Caco-2 (cell line): ENCODE measurements at regions of chr4 and their contacts with region 1.

Region 1: DNA sequence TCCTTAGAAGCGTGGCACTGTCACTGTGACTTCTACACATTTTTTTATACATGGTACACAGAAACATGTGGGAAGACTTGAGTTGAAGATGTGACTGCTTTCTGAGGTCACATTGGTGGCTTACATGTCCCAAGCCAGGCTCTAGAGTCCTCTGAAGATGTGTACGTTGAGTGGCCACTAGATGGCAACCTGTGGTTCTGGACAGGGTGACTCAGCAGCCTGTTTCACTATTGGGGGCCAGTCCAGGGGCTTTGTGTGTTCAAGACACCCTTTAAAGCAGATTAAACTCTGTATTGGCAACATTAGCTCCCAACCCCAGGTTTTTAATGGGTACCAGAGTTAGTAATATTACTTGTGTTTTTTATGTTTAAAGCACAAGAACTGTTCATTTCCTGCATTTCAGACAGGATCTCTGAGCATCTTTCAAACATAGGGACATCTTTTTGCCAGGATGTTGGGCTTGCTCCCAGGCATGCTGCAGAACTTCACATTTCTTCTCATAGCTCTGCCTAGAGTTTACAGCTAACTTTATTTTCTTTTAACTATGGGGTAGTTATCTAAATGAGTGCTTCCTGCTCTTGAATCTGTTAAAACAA is 53.0 kb downstream of the DCUN1D4 start:
- DNase-seq: peak; percentile 64 to 65
- H3K4me3 ChIP-seq: no peak overlapping the region
- H3K4me3 Mint-ChIP-seq: no peak overlapping the region
- H3K27ac Mint-ChIP-seq: peak overlapping the region; percentile 78
- H3K4me1 ChIP-seq: no peaks in the 10 kb centered on the region
- H3K4me1 Mint-ChIP-seq: no peaks in the 10 kb centered on the region
- H3K27me3 ChIP-seq: no peaks in the 10 kb centered on the region
- H3K27me3 Mint-ChIP-seq: no peaks in the 10 kb centered on the region
- CTCF ChIP-seq: peak; percentile 56 to 81

Region 2: GRCh38 chr4:51831133-51831532 is 64.8 kb before region 1 on chr4:
- CTCF ChIA-PET with region 1: no interaction called
- POLR2A ChIA-PET with region 1: no interaction called
- intact Hi-C with region 1: loop called (anchors 1 kb)
- DNase-seq: peak; percentile 64 to 75
- H3K4me3 ChIP-seq: no peak overlapping the region
- H3K4me3 Mint-ChIP-seq: no peak overlapping the region
- H3K27ac Mint-ChIP-seq: no peak overlapping the region
- H3K4me1 ChIP-seq: no peaks in the 10 kb centered on the region
- H3K4me1 Mint-ChIP-seq: no peaks in the 10 kb centered on the region
- H3K27me3 ChIP-seq: no peaks in the 10 kb centered on the region
- H3K27me3 Mint-ChIP-seq: peaks cover 8% of the 10 kb centered on the region
- CTCF ChIP-seq: peak; percentile 68 to 78

Region 3: GRCh38 chr4:51909236-51909703 is 13.4 kb after region 1 on chr4:
- CTCF ChIA-PET with region 1: no interaction called
- POLR2A ChIA-PET with region 1: no interaction called
- intact Hi-C with region 1: loop called (anchors 1 kb)
- DNase-seq: peak; percentile 83 to 85
- H3K4me3 ChIP-seq: no peak overlapping the region
- H3K4me3 Mint-ChIP-seq: peak overlapping the region; percentile 61
- H3K27ac Mint-ChIP-seq: peak overlapping the region; percentile 83
- H3K4me1 ChIP-seq: peaks cover 24% of the 10 kb centered on the region
- H3K4me1 Mint-ChIP-seq: peaks cover 20% of the 10 kb centered on the region
- H3K27me3 ChIP-seq: no peaks in the 10 kb centered on the region
- H3K27me3 Mint-ChIP-seq: no peaks in the 10 kb centered on the region
- CTCF ChIP-seq: no peak

Region 4: GRCh38 chr4:51958199-51958968 is 62.5 kb after region 1 on chr4:
- CTCF ChIA-PET with region 1: no interaction called
- POLR2A ChIA-PET with region 1: no interaction called
- intact Hi-C with region 1: loop called (anchors 5 kb)
- DNase-seq: no peak
- H3K4me3 ChIP-seq: no peak overlapping the region
- H3K4me3 Mint-ChIP-seq: no peak overlapping the region
- H3K27ac Mint-ChIP-seq: no peak overlapping the region
- H3K4me1 ChIP-seq: no peaks in the 10 kb centered on the region
- H3K4me1 Mint-ChIP-seq: no peaks in the 10 kb centered on the region
- H3K27me3 ChIP-seq: no peaks in the 10 kb centered on the region
- H3K27me3 Mint-ChIP-seq: peaks cover 2% of the 10 kb centered on the region
- CTCF ChIP-seq: no peak

Region 5: DNA sequence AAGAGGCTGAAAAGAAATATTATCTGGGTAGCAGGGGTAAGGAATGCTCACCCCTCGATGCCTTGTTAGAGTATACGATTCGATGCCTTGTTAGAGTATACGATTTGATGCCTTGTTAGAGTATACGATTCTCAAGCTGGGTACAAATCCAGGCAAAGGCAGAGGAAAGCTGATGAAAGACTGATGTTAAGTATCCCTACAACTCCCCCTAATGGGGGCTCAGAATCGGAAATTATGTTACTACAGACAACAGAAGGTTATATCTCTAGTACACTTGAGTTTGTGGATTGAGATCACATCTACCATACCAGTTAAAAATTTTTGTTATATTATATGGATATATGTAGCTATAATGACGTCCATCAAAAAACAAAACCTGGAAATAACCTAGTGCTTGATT is 119.5 kb after region 1 on chr4:
- CTCF ChIA-PET with region 1: interaction called, 8 read pairs
- POLR2A ChIA-PET with region 1: no interaction called
- intact Hi-C with region 1: loop called (anchors 1 kb)
- DNase-seq: peak in 1 of 2 experiments; percentile 32
- H3K4me3 ChIP-seq: no peak overlapping the region
- H3K4me3 Mint-ChIP-seq: no peak overlapping the region
- H3K27ac Mint-ChIP-seq: no peak overlapping the region
- H3K4me1 ChIP-seq: peaks cover 3% of the 10 kb centered on the region; the same call in 1 of the 2 replicates
- H3K4me1 Mint-ChIP-seq: no peaks in the 10 kb centered on the region
- H3K27me3 ChIP-seq: no peaks in the 10 kb centered on the region
- H3K27me3 Mint-ChIP-seq: no peaks in the 10 kb centered on the region
- CTCF ChIP-seq: peak; percentile 28 to 31

Region 6: GRCh38 chr4:52028969-52029368 is 133.1 kb after region 1 on chr4:
- CTCF ChIA-PET with region 1: interaction called, 3 read pairs
- POLR2A ChIA-PET with region 1: no interaction called
- intact Hi-C with region 1: loop called (anchors 1 kb)
- DNase-seq: no peak
- H3K4me3 ChIP-seq: no peak overlapping the region
- H3K4me3 Mint-ChIP-seq: no peak overlapping the region
- H3K27ac Mint-ChIP-seq: no peak overlapping the region
- H3K4me1 ChIP-seq: no peaks in the 10 kb centered on the region
- H3K4me1 Mint-ChIP-seq: no peaks in the 10 kb centered on the region
- H3K27me3 ChIP-seq: no peaks in the 10 kb centered on the region
- H3K27me3 Mint-ChIP-seq: no peaks in the 10 kb centered on the region
- CTCF ChIP-seq: no peak